ENCODE measurements at regions of chr20 and their contacts with region 1.

Region 1: GRCh38 chr20:21808863-21809664 is 103.6 kb downstream of the PAX1 start:
- DNase-seq: peak; percentile 89

Region 2: DNA sequence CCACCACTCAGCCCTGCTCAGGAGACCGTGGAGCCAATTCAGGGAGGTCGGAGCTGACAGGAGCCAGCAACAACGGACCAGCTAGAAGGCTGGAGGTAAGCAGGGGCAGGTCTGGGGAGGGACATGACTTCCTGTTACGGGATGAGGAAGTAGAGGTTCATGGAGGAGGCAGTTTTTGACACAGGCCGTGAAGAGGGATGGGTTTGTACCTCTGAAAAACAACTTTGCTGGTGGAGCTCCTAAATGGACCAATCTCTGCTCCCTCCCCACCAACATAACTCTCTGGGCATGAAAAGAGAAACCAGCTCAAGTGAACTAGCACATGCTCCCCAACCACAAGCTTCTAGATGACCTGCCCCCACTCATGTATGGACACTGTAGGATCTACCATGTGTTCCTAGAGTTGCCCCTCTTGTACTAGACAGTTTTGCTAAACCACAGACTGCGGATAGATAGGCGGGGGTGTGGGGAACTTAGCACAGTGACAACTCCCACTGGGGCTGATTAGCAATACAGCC is 1128.0 kb before region 1 on chr20:
- intact Hi-C with region 1: loop called in 1 of 2 experiments (anchors 10 kb)
- DNase-seq: no peak

Region 3: GRCh38 chr20:21781446-21782075 is 27.5 kb before region 1 on chr20:
- intact Hi-C with region 1: no loop called
- DNase-seq: no peak

Region 4: DNA sequence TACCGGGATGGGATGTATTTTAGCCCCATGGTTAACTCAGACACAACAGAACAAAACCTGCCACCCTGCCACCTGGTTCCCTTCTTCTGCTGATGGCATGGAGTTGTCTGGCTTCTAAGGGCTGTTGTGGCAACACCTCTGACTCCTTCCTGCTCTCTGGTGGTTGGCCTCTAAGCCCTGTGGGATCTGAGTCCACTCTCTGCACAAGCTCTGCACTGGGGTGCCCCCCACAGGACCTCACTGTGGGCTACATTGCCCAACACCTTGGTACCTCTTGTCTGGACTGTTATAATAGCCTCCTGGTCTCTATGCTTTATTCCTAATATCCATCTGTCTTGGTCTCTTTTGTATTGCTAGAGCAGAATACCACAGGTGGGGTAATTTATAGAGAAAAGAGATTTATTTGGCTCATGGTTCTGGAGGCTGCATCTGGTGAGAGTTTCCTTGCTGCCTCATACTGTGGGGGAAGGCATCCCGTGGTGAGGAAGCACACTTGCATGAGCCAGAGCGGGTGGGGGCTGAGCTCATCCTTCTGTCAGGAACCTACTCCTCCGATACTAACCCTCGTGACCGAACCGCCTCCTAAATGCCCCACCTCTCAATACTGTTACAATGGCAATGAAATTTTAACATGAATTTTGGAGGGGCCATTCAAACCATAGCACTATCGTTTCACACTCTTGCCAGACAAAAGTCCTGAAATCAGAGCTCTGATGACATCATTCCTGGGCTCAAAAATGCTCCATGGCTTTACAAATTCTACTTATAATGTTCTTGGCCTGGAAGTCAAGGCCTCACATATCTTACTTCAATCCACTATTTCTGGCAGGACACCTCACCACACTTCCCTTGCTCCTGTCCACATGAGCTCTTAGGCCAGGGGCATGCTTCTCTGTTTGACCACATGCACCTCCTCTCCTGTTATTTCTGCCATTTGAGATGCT is 23.6 kb after region 1 on chr20:
- intact Hi-C with region 1: no loop called
- DNase-seq: no peak

Region 5: DNA sequence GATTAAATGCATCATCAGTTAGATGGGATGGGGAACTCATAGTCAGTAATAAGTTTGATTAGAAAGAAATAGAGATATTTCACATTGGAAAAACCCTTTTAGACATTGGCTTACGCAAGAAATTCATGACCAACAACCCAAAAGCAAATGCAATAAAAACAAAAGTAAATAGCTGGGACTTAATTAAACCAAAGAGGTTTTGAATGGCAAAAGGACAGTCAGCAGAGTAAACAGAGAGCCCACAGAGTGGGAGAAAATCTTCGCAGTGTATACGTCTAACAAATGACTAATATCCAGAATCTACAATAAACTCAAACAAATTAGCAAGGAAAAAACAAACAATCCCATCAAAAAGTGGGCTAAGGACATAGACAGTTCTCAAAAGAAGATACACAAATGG is 51.8 kb after region 1 on chr20:
- intact Hi-C with region 1: no loop called
- DNase-seq: no peak

Region 6: DNA sequence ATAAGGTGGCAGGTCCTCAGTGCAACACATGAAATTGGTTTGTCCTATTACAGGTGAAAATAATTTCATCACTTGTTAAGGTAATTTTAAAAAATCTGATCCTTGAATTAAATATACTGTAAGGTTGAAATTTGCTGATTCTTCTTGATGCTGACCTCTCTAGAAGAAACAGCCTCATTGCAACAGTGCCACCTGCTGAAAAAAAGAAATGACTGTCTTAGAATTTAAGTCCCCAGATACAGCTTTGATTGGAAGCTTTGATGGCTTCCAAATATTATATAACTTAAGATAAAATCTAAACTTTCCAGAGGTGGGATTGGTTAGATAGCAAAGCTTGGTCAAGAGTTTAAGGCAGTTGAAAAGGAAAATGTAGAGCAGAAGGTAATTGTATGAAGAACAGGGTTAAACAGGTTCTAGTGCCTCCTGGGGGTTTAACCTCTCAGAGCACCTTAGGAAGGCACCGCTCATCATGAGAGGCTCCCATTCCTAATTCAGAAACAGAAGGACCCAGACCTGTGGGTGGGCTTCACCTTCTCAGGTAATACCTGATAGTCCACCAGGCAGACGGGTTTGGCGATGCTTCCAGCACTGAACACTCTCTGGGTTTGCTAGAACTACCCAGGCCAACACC is 297.4 kb after region 1 on chr20:
- intact Hi-C with region 1: loop called in 1 of 2 experiments (anchors 5 kb)
- DNase-seq: no peak